Thyroid gland (tissue), 4 donors: ENCODE measurements at regions of chr15 and their contacts with region 1.

Region 1: GRCh38 chr15:84783496-84784251 is 33.5 kb upstream of the ALPK3 start:
- DNase-seq: no peak
- H3K4me3 ChIP-seq: no peak overlapping the region
- H3K27ac ChIP-seq: no peak overlapping the region
- H3K4me1 ChIP-seq: peaks cover 14 to 18% of the 10 kb centered on the region in 2 donors
- H3K27me3 ChIP-seq: no peaks in the 10 kb centered on the region
- CTCF ChIP-seq: no peak
- POLR2A ChIP-seq: no peak

Region 2: GRCh38 chr15:84840741-84841429 is 57.2 kb after region 1 on chr15:
- intact Hi-C with region 1: loop called (anchors 10 kb)
- DNase-seq: peak; percentile 40 to 56
- H3K4me3 ChIP-seq: no peak overlapping the region
- H3K27ac ChIP-seq: peak overlapping the region in 2 of 3 donors; percentile 66 to 79
- H3K4me1 ChIP-seq: peaks cover 12 to 24% of the 10 kb centered on the region in 2 donors
- H3K27me3 ChIP-seq: no peaks in the 10 kb centered on the region
- CTCF ChIP-seq: no peak
- POLR2A ChIP-seq: no peak

Region 3: DNA sequence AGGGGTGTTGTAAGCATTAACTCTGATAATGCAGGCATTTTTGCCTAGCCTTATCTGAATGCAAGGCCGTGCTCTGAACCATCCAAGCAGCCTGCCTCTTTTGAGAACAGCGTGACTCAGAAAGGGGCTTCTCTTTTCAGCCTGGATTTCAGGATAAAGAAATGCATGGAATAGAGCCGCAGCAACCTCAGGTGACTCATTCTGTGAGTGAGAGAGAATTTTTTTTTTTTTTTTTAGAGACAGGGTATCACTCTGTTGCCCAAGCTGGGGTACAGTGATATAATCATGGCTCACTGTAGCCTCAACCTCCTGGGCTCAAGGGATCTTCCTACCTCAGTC is 177.4 kb after region 1 on chr15:
- intact Hi-C with region 1: no loop called
- DNase-seq: no peak
- H3K4me3 ChIP-seq: no peak overlapping the region
- H3K27ac ChIP-seq: no peak overlapping the region
- H3K4me1 ChIP-seq: no peaks in the 10 kb centered on the region
- H3K27me3 ChIP-seq: no peaks in the 10 kb centered on the region
- CTCF ChIP-seq: no peak
- POLR2A ChIP-seq: no peak